A673 (cell line): ENCODE measurements at regions of chr2 and their contacts with region 1.

Region 1: DNA sequence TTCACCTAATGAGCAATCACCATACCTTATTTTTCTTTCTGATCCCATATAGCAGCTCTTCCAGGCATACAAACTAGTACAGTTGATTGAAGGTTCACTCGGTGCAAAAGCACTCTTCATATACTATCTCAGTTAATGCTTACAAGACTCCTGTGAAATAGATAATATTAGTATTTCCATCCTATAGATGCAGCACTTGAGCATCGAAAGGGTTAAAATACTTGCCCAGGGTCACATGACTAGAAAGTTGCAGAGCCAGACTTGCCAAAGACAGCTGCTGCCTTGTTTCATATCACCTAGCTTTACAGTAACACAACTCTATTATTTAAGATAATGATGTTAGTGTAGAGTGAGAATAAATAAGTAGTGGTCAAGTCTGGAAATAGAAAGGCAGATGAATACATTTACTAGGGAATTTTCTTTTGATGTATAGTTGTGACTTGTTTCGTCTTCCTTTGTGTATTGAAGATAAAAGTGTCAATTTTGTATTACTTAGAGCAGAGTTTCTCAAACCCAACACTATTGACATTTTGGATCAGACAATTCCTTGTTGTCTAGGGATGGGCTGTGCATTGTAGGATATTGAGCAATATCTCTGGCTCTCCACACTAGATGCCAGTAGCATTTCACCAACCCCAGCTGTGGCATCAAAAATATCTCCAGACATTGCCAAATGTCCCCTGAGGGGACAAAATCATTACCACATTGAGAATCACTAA is 466.1 kb upstream of the TNP1 start:
- DNase-seq: peak; percentile 36
- H3K4me3 ChIP-seq: no peak overlapping the region
- H3K27ac ChIP-seq: peak overlapping the region; percentile 91
- H3K4me1 ChIP-seq: peaks cover 61% of the 10 kb centered on the region
- H3K27me3 ChIP-seq: no peaks in the 10 kb centered on the region
- CTCF ChIP-seq: peak; percentile 17; the same call in 1 of the 2 replicates

Region 2: GRCh38 chr2:216692636-216693413 is 633.2 kb before region 1 on chr2:
- CTCF ChIA-PET with region 1: no interaction called
- POLR2A ChIA-PET with region 1: interaction called, 27 read pairs
- intact Hi-C with region 1: loop called (anchors 5 kb)
- DNase-seq: peak; percentile 95
- H3K4me3 ChIP-seq: peak overlapping the region; percentile 62
- H3K27ac ChIP-seq: peak overlapping the region; percentile 70
- H3K4me1 ChIP-seq: peaks cover 42% of the 10 kb centered on the region
- H3K27me3 ChIP-seq: no peaks in the 10 kb centered on the region
- CTCF ChIP-seq: no peak

Region 3: GRCh38 chr2:217338306-217338916 is 12.4 kb after region 1 on chr2:
- CTCF ChIA-PET with region 1: no interaction called
- POLR2A ChIA-PET with region 1: interaction called, 13 read pairs
- intact Hi-C with region 1: no loop called
- DNase-seq: peak; percentile 87
- H3K4me3 ChIP-seq: no peak overlapping the region
- H3K27ac ChIP-seq: peak overlapping the region; percentile 60
- H3K4me1 ChIP-seq: peaks cover 32% of the 10 kb centered on the region
- H3K27me3 ChIP-seq: no peaks in the 10 kb centered on the region
- CTCF ChIP-seq: no peak

Region 4: GRCh38 chr2:217367464-217367863 is 41.5 kb after region 1 on chr2:
- CTCF ChIA-PET with region 1: no interaction called
- POLR2A ChIA-PET with region 1: no interaction called
- intact Hi-C with region 1: loop called (anchors 5 kb)
- DNase-seq: no peak
- H3K4me3 ChIP-seq: no peak overlapping the region
- H3K27ac ChIP-seq: no peak overlapping the region
- H3K4me1 ChIP-seq: peaks cover 16% of the 10 kb centered on the region
- H3K27me3 ChIP-seq: no peaks in the 10 kb centered on the region
- CTCF ChIP-seq: no peak

Region 5: GRCh38 chr2:217551252-217551899 is 225.4 kb after region 1 on chr2:
- CTCF ChIA-PET with region 1: no interaction called
- POLR2A ChIA-PET with region 1: no interaction called
- intact Hi-C with region 1: no loop called
- DNase-seq: no peak
- H3K4me3 ChIP-seq: no peak overlapping the region
- H3K27ac ChIP-seq: no peak overlapping the region
- H3K4me1 ChIP-seq: no peaks in the 10 kb centered on the region
- H3K27me3 ChIP-seq: peaks cover 4% of the 10 kb centered on the region
- CTCF ChIP-seq: no peak